ENCODE measurements at regions of chr3 and their contacts with region 1.

Region 1: DNA sequence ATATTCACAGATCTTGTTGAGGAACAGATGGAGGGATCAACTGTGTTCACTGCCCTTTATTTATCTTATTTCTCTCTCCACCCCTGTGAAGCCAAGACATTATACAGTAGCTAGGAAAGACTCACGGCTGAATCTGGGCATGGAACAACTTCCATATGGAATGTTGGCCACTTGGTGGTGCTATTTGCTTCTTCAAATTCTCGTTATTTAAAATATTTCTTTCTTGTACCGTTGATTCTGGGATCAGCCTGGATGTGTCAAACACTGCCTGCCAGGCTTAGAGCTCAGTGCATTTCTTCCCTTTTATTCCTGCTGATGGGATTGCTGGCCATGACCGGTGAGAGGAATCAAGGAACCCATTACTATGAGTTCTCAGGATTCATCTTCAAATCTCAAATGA is 17.5 kb upstream of the GASK1A start:
- DNase-seq: peak; percentile 29
- ATAC-seq: peak; percentile 77
- H3K4me3 Mint-ChIP-seq: no peak overlapping the region
- H3K27ac Mint-ChIP-seq: no peak overlapping the region
- H3K4me1 Mint-ChIP-seq: no peaks in the 10 kb centered on the region
- H3K27me3 Mint-ChIP-seq: no peaks in the 10 kb centered on the region; the same call in 1 of the 2 replicates
- CTCF ChIP-seq: no peak

Region 2: DNA sequence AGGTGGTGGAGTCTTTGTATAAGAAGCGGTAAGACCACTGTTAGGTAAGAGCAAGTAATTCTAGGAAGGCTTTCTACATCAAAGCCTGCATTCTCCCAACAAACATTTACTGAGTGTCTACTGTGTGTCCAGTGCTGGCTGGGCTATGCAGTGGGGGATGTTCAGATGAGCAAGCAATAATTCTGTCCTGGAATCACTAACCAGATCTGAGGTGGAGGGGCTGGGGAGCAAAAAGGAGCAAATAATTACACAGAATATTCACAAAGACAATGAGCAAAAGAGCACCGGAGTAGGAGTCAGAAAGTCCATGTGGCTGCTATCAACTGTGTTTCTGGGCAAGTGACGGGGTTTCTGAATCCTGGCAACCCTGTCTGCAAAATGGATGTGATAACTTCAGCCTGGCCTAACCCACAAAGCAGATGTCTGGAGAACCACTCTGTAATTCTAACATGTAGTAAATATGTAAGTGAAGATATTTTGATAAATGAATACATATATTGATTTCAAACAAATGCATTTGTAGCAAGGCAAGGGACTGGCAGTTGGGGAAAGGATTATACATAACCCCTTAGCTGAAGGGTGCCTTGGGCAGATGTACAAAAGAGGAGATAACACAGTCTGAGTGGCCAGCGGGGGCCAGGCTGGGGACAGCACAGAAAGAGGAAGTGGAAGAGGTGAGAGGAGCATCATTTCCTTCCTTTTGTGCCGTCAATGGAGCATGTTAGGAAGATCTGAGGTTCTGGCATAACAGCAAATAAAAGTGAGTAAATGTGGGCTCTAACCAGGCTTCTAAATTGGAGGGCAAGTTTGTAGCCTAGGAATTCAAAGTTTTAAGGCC is 114.7 kb before region 1 on chr3:
- CTCF ChIA-PET with region 1: no interaction called
- POLR2A ChIA-PET with region 1: no interaction called
- DNase-seq: no peak
- ATAC-seq: no peak
- H3K4me3 Mint-ChIP-seq: no peak overlapping the region
- H3K27ac Mint-ChIP-seq: no peak overlapping the region; the same call in 1 of the 2 replicates
- H3K4me1 Mint-ChIP-seq: peaks cover 14% of the 10 kb centered on the region
- H3K27me3 Mint-ChIP-seq: no peaks in the 10 kb centered on the region
- CTCF ChIP-seq: no peak

Region 3: GRCh38 chr3:42880601-42881451 is 80.8 kb before region 1 on chr3:
- CTCF ChIA-PET with region 1: interaction called, 15 read pairs
- POLR2A ChIA-PET with region 1: no interaction called
- DNase-seq: peak; percentile 91
- ATAC-seq: peak; percentile 97
- H3K4me3 Mint-ChIP-seq: peak overlapping the region; percentile 85
- H3K27ac Mint-ChIP-seq: 0 out of 2 replicates have a peak overlapping the region, but pooled peaks have one; percentile 77
- H3K4me1 Mint-ChIP-seq: peaks cover 25% of the 10 kb centered on the region
- H3K27me3 Mint-ChIP-seq: peaks cover 7% of the 10 kb centered on the region
- CTCF ChIP-seq: peak; percentile 57; the same call in 1 of the 2 replicates

Region 4: GRCh38 chr3:43009547-43009946 is 47.9 kb after region 1 on chr3:
- CTCF ChIA-PET with region 1: interaction called, 27 read pairs
- POLR2A ChIA-PET with region 1: no interaction called
- DNase-seq: no peak
- ATAC-seq: no peak
- H3K4me3 Mint-ChIP-seq: no peak overlapping the region
- H3K27ac Mint-ChIP-seq: no peak overlapping the region
- H3K4me1 Mint-ChIP-seq: 0 out of 2 replicates have a peak, but pooled peaks cover 2% of the 10 kb centered on the region
- H3K27me3 Mint-ChIP-seq: no peaks in the 10 kb centered on the region
- CTCF ChIP-seq: no peak

Region 5: DNA sequence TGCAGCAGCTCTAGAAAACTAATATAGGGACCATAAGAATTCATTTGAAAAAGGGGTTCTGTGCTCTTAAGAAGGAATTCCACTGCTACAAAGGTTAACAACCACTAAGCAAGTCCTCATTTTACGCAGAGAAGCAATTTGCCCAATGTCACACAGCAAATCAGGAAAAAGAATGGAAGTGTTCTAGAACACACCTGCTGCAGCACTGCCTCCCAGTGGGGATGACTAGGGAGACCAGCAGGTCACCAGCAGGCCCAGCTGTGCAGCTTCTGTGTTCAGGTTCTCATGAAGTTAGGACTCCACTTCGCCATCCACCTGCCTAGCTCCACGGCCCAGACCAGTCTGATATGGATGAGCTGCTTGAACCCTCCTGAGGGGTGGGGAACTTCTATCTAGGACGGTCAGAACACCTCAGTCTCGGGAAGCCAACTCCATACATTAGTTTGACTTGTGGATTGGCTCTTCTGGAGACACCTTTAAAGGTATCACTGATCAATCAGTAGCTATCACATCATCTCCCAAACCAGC is 125.7 kb after region 1 on chr3:
- CTCF ChIA-PET with region 1: interaction called, 27 read pairs
- POLR2A ChIA-PET with region 1: no interaction called
- DNase-seq: no peak
- ATAC-seq: no peak
- H3K4me3 Mint-ChIP-seq: no peak overlapping the region
- H3K27ac Mint-ChIP-seq: no peak overlapping the region
- H3K4me1 Mint-ChIP-seq: no peaks in the 10 kb centered on the region
- H3K27me3 Mint-ChIP-seq: no peaks in the 10 kb centered on the region; the same call in 1 of the 2 replicates
- CTCF ChIP-seq: no peak

Region 6: GRCh38 chr3:43155464-43156121 is 194.0 kb after region 1 on chr3:
- CTCF ChIA-PET with region 1: interaction called, 62 read pairs
- POLR2A ChIA-PET with region 1: no interaction called
- DNase-seq: peak; percentile 71
- ATAC-seq: peak; percentile 96
- H3K4me3 Mint-ChIP-seq: no peak overlapping the region
- H3K27ac Mint-ChIP-seq: no peak overlapping the region
- H3K4me1 Mint-ChIP-seq: peaks cover 6% of the 10 kb centered on the region
- H3K27me3 Mint-ChIP-seq: peaks cover 14% of the 10 kb centered on the region
- CTCF ChIP-seq: no peak; the same call in 1 of the 2 replicates

Region 7: GRCh38 chr3:43503067-43503728 is 541.6 kb after region 1 on chr3:
- CTCF ChIA-PET with region 1: interaction called, 10 read pairs
- POLR2A ChIA-PET with region 1: no interaction called
- DNase-seq: no peak
- ATAC-seq: peak; percentile 60
- H3K4me3 Mint-ChIP-seq: no peak overlapping the region
- H3K27ac Mint-ChIP-seq: no peak overlapping the region
- H3K4me1 Mint-ChIP-seq: peaks cover 10% of the 10 kb centered on the region
- H3K27me3 Mint-ChIP-seq: no peaks in the 10 kb centered on the region
- CTCF ChIP-seq: peak; percentile 43; the same call in 1 of the 2 replicates

Measured in WTC11 (cell line).